ENCODE measurements at regions of chr11 and their contacts with region 1.

Region 1: DNA sequence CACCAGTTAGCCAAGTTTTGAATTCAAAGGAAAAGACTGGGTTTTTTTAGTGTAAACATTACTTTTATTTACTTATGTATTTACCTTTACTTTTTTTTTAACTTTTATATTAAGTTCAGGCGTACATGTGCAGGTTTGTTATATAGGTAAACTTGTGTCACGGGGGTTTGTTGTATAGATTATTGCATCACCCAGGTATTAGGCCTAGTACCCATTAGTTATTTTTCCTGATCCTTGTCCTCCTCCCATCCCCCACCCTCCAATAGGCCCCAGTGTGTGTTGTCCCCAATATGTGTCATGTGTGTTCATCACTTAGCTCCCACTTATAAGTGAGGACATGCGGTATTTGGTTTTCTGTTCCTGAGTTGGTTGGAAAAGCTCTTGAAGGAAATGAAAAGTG is 20.6 kb downstream of the ZW10 start:
- DNase-seq: no peak
- ATAC-seq: no peak
- H3K4me3 ChIP-seq: no peak overlapping the region
- H3K4me3 Mint-ChIP-seq: no peak overlapping the region
- H3K27ac ChIP-seq: no peak overlapping the region
- H3K27ac Mint-ChIP-seq: no peak overlapping the region
- H3K4me1 ChIP-seq: no peaks in the 10 kb centered on the region
- H3K4me1 Mint-ChIP-seq: no peaks in the 10 kb centered on the region
- H3K27me3 ChIP-seq: no peaks in the 10 kb centered on the region
- H3K27me3 Mint-ChIP-seq: no peaks in the 10 kb centered on the region

Region 2: GRCh38 chr11:113764527-113765219 is 11.7 kb after region 1 on chr11:
- CTCF ChIA-PET with region 1: no interaction called
- POLR2A ChIA-PET with region 1: no interaction called
- intact Hi-C with region 1: loop called in 1 of 2 experiments (anchors 1 kb)
- DNase-seq: no peak
- ATAC-seq: no peak
- H3K4me3 ChIP-seq: no peak overlapping the region
- H3K4me3 Mint-ChIP-seq: no peak overlapping the region
- H3K27ac ChIP-seq: no peak overlapping the region
- H3K27ac Mint-ChIP-seq: peak overlapping the region in 1 of 9 donors; percentile 85
- H3K4me1 ChIP-seq: no peaks in the 10 kb centered on the region
- H3K4me1 Mint-ChIP-seq: peaks cover 12 to 35% (median 26%) of the 10 kb centered on the region in 7 donors
- H3K27me3 ChIP-seq: no peaks in the 10 kb centered on the region
- H3K27me3 Mint-ChIP-seq: no peaks in the 10 kb centered on the region

Measured in naive thymus-derived CD4-positive, alpha-beta T cell (primary cell).